Naive thymus-derived CD4-positive, alpha-beta T cell (primary cell): ENCODE measurements at regions of chr20 and their contacts with region 1.

Region 1: GRCh38 chr20:8156235-8157079 is 24.4 kb downstream of the PLCB1 start:
- DNase-seq: no peak
- ATAC-seq: peak; percentile 81
- H3K4me3 ChIP-seq: no peak overlapping the region
- H3K4me3 Mint-ChIP-seq: peak overlapping the region in 4 of 10 donors; percentile 4 to 29 (median 8)
- H3K27ac ChIP-seq: no peak overlapping the region
- H3K27ac Mint-ChIP-seq: peak overlapping the region in 1 of 9 donors; percentile 4
- H3K4me1 ChIP-seq: peaks cover 13 to 61% of the 10 kb centered on the region in 2 donors
- H3K4me1 Mint-ChIP-seq: peaks cover 28 to 61% (median 51%) of the 10 kb centered on the region in 7 donors
- H3K27me3 ChIP-seq: no peaks in the 10 kb centered on the region
- H3K27me3 Mint-ChIP-seq: peaks cover 0 to 6% (median 0%) of the 10 kb centered on the region in 5 donors

Region 2: GRCh38 chr20:8144282-8145245 is 11.9 kb before region 1 on chr20:
- CTCF ChIA-PET with region 1: no interaction called
- POLR2A ChIA-PET with region 1: no interaction called
- intact Hi-C with region 1: no loop called
- DNase-seq: no peak
- ATAC-seq: peak; percentile 42
- H3K4me3 ChIP-seq: no peak overlapping the region
- H3K4me3 Mint-ChIP-seq: peak overlapping the region in 5 of 10 donors; percentile 5 to 40 (median 8)
- H3K27ac ChIP-seq: no peak overlapping the region
- H3K27ac Mint-ChIP-seq: peak overlapping the region in 4 of 9 donors; percentile 5 to 39 (median 17)
- H3K4me1 ChIP-seq: peaks cover 0 to 17% of the 10 kb centered on the region in 2 donors
- H3K4me1 Mint-ChIP-seq: peaks cover 7 to 18% (median 13%) of the 10 kb centered on the region in 7 donors
- H3K27me3 ChIP-seq: no peaks in the 10 kb centered on the region
- H3K27me3 Mint-ChIP-seq: peaks cover 0 to 2% (median 0%) of the 10 kb centered on the region in 5 donors

Region 3: DNA sequence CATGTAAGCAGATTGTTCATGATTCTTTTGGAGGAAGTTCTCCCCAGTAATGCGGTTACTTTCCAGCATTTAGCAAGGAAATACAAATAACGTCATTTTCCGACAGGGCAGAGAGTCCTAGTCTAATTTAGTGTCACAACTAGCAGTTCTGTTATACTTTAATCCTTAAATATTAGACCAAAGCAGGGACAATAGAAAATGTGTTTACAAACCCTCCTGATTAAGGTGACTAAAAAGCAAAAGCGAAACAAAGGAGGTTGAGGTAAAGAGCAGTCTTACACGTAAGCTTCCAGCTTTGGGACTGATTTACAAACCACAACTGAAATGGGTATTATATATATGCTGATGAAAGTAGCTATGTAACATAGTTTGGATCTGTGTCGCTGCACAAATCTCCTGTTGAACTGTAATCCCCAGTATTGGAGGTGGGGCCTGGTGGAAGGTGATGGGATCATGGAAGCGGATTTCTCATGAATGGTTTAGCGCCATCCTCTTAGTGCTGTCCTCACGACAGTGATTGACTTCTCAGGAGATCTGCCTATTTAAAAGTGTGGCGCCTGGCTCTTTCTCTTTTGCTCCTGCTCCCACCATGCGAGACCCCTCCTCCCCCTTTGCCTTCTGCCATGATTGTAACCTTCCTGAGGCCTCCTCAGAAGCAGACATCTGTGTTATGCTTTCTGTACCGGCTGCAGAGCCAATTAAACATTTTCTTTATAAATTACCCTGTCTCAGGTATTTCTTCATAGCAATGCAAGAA is 57.6 kb after region 1 on chr20:
- CTCF ChIA-PET with region 1: no interaction called
- POLR2A ChIA-PET with region 1: no interaction called
- intact Hi-C with region 1: loop called (anchors 2 to 5 kb)
- DNase-seq: peak in 7 of 9 donors; percentile 7 to 44 (median 20)
- ATAC-seq: peak; percentile 77
- H3K4me3 ChIP-seq: peak overlapping the region; percentile 34
- H3K4me3 Mint-ChIP-seq: peak overlapping the region; percentile 71 to 89 (median 82)
- H3K27ac ChIP-seq: peak overlapping the region; percentile 12
- H3K27ac Mint-ChIP-seq: peak overlapping the region; percentile 41 to 90 (median 80)
- H3K4me1 ChIP-seq: peaks cover 5 to 10% of the 10 kb centered on the region in 2 donors
- H3K4me1 Mint-ChIP-seq: peaks cover 12 to 39% (median 28%) of the 10 kb centered on the region in 7 donors
- H3K27me3 ChIP-seq: no peaks in the 10 kb centered on the region
- H3K27me3 Mint-ChIP-seq: peaks cover 0 to 12% (median 0%) of the 10 kb centered on the region in 5 donors